ENCODE measurements at regions of chr19 and their contacts with region 1.

Region 1: GRCh38 chr19:17859533-17860330 is at the start of gene RPL18A:
- DNase-seq: peak; percentile 99
- ATAC-seq: peak; percentile 94
- H3K4me3 ChIP-seq: peak within 1 kb of the TSS; percentile 74 to 100 (median 96)
- H3K4me3 Mint-ChIP-seq: peak within 1 kb of the TSS; percentile 96
- H3K27ac ChIP-seq: peak within 1 kb of the TSS; percentile 69 to 76
- H3K27ac Mint-ChIP-seq: peak within 1 kb of the TSS; percentile 98
- H3K4me1 ChIP-seq: peaks cover 23 to 41% of the 10 kb centered on the region in 2 donors
- H3K4me1 Mint-ChIP-seq: peaks cover 45% of the 10 kb centered on the region
- H3K27me3 ChIP-seq: no peaks in the 10 kb centered on the region
- H3K27me3 Mint-ChIP-seq: no peaks in the 10 kb centered on the region
- CTCF ChIP-seq: peak; percentile 84
- total RNA-seq, gene RPL18A: 3,099 and 3,228 TPM in 2 replicates

Region 2: GRCh38 chr19:17496337-17496997 is 363.3 kb before region 1 on chr19:
- CTCF ChIA-PET with region 1: interaction called, 13 read pairs
- POLR2A ChIA-PET with region 1: interaction called, 3 read pairs
- intact Hi-C with region 1: loop called (anchors 1 kb)
- DNase-seq: peak; percentile 88
- ATAC-seq: peak; percentile 99
- H3K4me3 ChIP-seq: no peak overlapping the region
- H3K4me3 Mint-ChIP-seq: peak overlapping the region; percentile 16
- H3K27ac ChIP-seq: no peak overlapping the region
- H3K27ac Mint-ChIP-seq: no peak overlapping the region
- H3K4me1 ChIP-seq: peaks cover 7 to 21% of the 10 kb centered on the region in 2 donors
- H3K4me1 Mint-ChIP-seq: peaks cover 25% of the 10 kb centered on the region
- H3K27me3 ChIP-seq: no peaks in the 10 kb centered on the region
- H3K27me3 Mint-ChIP-seq: no peaks in the 10 kb centered on the region
- CTCF ChIP-seq: peak; percentile 97

Region 3: GRCh38 chr19:17605761-17606745 is 253.7 kb before region 1 on chr19:
- CTCF ChIA-PET with region 1: interaction called, 15 read pairs
- POLR2A ChIA-PET with region 1: no interaction called
- intact Hi-C with region 1: loop called (anchors 1 kb)
- DNase-seq: peak; percentile 96
- ATAC-seq: peak; percentile 90
- H3K4me3 ChIP-seq: peak overlapping the region in 4 of 5 experiments; percentile 33 to 60 (median 46)
- H3K4me3 Mint-ChIP-seq: peak overlapping the region; percentile 85
- H3K27ac ChIP-seq: peak overlapping the region; percentile 18 to 44
- H3K27ac Mint-ChIP-seq: peak overlapping the region; percentile 72
- H3K4me1 ChIP-seq: peaks cover 11 to 12% of the 10 kb centered on the region in 2 donors
- H3K4me1 Mint-ChIP-seq: peaks cover 22% of the 10 kb centered on the region
- H3K27me3 ChIP-seq: peaks cover 0 to 33% (median 10%) of the 10 kb centered on the region in 4 experiments
- H3K27me3 Mint-ChIP-seq: peaks cover 32% of the 10 kb centered on the region
- CTCF ChIP-seq: peak; percentile 94

Region 4: DNA sequence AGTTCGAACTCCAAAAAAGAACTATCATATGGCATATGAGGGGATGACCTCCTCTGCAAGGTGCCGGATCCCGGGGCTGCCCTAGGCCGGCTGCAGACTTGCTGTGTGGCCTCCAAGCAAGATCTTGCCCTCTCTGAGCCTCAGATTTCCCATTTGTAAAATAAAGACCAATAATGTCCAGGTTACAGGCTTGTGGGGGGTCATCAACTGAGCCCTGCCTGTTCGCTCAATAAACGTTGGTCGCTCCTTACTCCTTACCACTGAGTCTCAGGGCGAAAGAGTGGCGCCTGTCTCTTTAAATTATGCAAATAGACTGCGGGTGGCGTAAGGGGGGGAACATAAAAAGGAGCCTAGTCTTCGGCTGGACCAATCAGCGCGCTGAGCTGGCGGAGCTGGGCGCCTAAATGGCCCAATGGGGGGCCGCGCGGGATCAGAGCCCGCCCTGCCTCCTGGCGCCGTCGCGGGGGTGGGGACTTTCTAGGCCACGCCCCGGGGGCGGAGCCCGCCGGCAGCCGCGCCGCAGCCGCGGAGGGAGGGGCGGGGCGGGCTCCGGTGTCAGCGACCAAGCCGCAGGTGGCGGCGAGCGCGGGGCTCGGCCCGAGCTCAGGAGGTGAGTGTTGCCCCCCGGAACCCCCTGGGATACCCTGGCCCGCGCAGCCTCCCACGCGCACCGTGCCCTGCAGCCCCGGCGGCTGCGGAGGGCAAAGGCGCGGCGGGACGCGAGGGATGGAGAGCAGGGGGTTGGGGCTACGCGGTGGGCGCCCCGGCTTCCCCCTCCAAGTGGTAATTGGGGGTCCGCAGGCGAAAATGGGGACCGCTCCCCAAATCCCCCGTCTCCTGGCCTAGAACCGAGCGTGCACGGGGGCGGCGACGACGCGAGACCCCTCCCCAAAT is 112.3 kb before region 1 on chr19:
- CTCF ChIA-PET with region 1: interaction called, 5 read pairs
- POLR2A ChIA-PET with region 1: interaction called, 4 read pairs
- intact Hi-C with region 1: loop called (anchors 5 kb)
- DNase-seq: peak; percentile 97
- ATAC-seq: peak; percentile 80
- H3K4me3 ChIP-seq: peak overlapping the region; percentile 38 to 72 (median 70)
- H3K4me3 Mint-ChIP-seq: peak overlapping the region; percentile 89
- H3K27ac ChIP-seq: peak overlapping the region in 1 of 2 donors; percentile 26
- H3K27ac Mint-ChIP-seq: peak overlapping the region; percentile 71
- H3K4me1 ChIP-seq: peaks cover 38 to 60% of the 10 kb centered on the region in 2 donors
- H3K4me1 Mint-ChIP-seq: peaks cover 51% of the 10 kb centered on the region
- H3K27me3 ChIP-seq: no peaks in the 10 kb centered on the region
- H3K27me3 Mint-ChIP-seq: no peaks in the 10 kb centered on the region
- CTCF ChIP-seq: no peak

Region 5: DNA sequence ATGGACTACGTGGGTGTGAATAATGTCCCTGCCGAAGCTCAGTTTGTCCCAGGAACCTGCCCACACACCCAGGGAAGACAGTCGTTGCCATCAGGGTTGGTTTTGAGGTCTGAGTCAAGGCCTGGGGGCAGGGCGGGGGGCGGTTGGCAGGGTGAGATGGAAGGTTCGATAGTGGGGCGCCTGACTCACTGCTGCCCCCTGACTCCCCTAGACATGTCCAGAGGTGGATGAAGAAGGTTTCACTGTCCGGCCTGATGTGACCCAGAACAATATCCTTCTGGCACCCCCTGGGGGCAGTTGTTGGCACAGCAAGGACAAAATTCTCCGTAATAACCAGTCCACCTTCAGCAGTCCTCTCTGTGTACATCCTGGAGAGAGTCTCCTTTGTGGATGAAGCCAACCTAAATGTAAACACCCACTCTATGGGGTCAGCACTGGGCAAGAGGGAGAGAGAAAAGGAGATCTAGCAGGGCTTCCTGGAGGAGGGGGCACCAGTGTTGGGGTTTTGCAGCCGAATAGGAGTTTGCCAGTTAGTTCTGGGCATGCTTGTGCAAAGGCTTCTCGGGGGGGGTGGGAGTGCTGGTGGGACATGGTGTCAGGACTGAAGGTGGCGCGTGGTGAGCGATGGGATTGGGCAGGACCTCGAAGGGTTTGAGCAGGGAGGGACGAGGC is 84.4 kb before region 1 on chr19:
- CTCF ChIA-PET with region 1: interaction called, 10 read pairs
- POLR2A ChIA-PET with region 1: interaction called, 8 read pairs
- intact Hi-C with region 1: no loop called
- DNase-seq: peak; percentile 57
- ATAC-seq: no peak
- H3K4me3 ChIP-seq: peak overlapping the region in 1 of 5 experiments; percentile 22
- H3K4me3 Mint-ChIP-seq: peak overlapping the region; percentile 88
- H3K27ac ChIP-seq: peak overlapping the region; percentile 90
- H3K27ac Mint-ChIP-seq: peak overlapping the region; percentile 100
- H3K4me1 ChIP-seq: peaks cover 42 to 49% of the 10 kb centered on the region in 2 donors
- H3K4me1 Mint-ChIP-seq: peaks cover 41% of the 10 kb centered on the region
- H3K27me3 ChIP-seq: no peaks in the 10 kb centered on the region
- H3K27me3 Mint-ChIP-seq: no peaks in the 10 kb centered on the region
- CTCF ChIP-seq: peak; percentile 43

Region 6: GRCh38 chr19:17873786-17874757 is 14.3 kb after region 1 on chr19:
- CTCF ChIA-PET with region 1: interaction called, 23 read pairs
- POLR2A ChIA-PET with region 1: interaction called, 7 read pairs
- intact Hi-C with region 1: no loop called
- DNase-seq: peak; percentile 84
- ATAC-seq: peak; percentile 81
- H3K4me3 ChIP-seq: peak overlapping the region in 4 of 5 experiments; percentile 38 to 53 (median 46)
- H3K4me3 Mint-ChIP-seq: peak overlapping the region; percentile 74
- H3K27ac ChIP-seq: no peak overlapping the region
- H3K27ac Mint-ChIP-seq: no peak overlapping the region
- H3K4me1 ChIP-seq: peaks cover 25 to 31% of the 10 kb centered on the region in 2 donors
- H3K4me1 Mint-ChIP-seq: peaks cover 20% of the 10 kb centered on the region
- H3K27me3 ChIP-seq: peaks cover 0 to 33% (median 15%) of the 10 kb centered on the region in 4 experiments
- H3K27me3 Mint-ChIP-seq: peaks cover 5% of the 10 kb centered on the region
- CTCF ChIP-seq: no peak

Region 7: DNA sequence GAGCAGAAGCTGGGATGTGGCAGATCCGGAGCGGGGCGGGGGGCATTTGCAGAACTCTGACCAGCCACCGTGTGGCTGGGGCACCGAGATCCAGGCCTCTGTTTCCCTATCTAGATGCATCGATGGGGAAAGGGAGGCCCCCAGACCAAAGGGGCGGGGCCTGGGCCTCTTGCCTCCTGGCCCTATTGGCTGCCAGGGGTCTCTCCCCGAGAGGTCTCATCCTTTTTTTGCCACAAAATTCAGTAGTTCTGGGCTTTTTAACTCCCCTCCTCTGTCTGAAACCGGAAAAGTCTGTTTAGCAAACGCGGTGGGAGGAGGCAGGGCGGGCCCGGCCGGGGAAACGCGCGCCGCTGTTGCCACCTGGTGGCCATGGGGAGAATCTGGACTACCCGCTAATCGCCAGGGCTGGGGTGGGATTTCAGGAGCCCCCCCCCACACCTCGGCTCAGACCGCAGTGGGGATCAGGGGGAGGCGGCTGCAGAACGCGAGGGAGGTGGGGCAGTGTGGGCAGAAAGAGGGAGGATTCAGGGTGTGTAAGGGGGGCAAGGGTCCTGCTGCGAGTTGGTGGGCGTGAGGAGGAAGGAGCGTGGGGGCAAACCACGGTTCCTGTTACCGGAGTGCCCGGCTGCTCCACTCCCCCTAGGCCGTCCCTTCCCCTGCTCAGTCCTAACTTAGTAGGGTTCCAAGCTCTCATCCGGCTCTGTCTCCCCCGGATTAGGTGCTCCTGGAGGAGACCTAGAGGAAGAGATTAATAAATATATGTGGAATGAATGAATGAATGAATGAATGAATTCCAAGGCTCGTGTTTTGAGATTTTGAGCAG is 198.7 kb after region 1 on chr19:
- CTCF ChIA-PET with region 1: interaction called, 10 read pairs
- POLR2A ChIA-PET with region 1: no interaction called
- intact Hi-C with region 1: no loop called
- DNase-seq: peak; percentile 90
- ATAC-seq: peak; percentile 96
- H3K4me3 ChIP-seq: peak overlapping the region in 3 of 5 experiments; percentile 21 to 23 (median 23)
- H3K4me3 Mint-ChIP-seq: peak overlapping the region; percentile 65
- H3K27ac ChIP-seq: peak overlapping the region; percentile 67 to 71
- H3K27ac Mint-ChIP-seq: peak overlapping the region; percentile 89
- H3K4me1 ChIP-seq: peaks cover 11 to 13% of the 10 kb centered on the region in 2 donors
- H3K4me1 Mint-ChIP-seq: peaks cover 20% of the 10 kb centered on the region
- H3K27me3 ChIP-seq: no peaks in the 10 kb centered on the region
- H3K27me3 Mint-ChIP-seq: no peaks in the 10 kb centered on the region
- CTCF ChIP-seq: peak; percentile 96

Region 8: DNA sequence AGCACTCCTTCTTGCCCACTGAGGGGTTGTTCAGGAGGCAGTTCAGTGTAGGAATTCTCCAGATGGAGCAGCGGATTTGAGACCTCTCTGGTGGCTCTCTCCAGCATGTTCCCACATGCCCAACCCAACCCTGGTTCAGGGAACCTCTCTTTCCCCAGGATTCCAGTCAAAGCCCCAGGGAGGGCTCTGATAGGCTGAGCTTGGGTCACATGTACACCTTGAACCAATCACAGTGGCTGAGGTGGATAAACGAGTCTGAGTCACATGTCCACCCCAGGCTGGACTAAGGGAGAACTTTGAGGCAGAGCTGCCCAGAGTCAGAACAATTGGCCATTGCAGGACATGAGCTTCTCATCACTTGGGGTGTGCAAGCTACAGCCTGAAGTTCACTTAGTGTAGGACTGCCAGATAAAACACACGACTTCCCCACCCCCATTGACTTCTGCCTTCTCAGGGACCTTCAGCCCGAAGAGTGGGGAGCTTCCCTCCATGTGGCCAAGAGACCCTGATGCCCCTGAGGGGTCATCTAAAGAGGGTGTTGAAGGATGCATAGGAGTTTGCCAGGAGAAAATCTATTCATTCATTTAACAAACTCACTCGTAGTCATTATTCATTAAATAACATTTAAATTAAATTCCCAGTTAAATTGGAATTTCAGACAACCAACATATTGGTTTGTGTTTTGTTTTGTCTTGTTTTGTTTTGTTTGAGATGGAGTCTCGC is 233.9 kb after region 1 on chr19:
- CTCF ChIA-PET with region 1: no interaction called
- POLR2A ChIA-PET with region 1: no interaction called
- intact Hi-C with region 1: no loop called
- DNase-seq: no peak
- ATAC-seq: no peak
- H3K4me3 ChIP-seq: no peak overlapping the region
- H3K4me3 Mint-ChIP-seq: no peak overlapping the region
- H3K27ac ChIP-seq: no peak overlapping the region
- H3K27ac Mint-ChIP-seq: no peak overlapping the region
- H3K4me1 ChIP-seq: peaks cover 36 to 54% of the 10 kb centered on the region in 2 donors
- H3K4me1 Mint-ChIP-seq: peaks cover 44% of the 10 kb centered on the region
- H3K27me3 ChIP-seq: no peaks in the 10 kb centered on the region
- H3K27me3 Mint-ChIP-seq: no peaks in the 10 kb centered on the region
- CTCF ChIP-seq: no peak